ENCODE measurements at regions of chr10 and their contacts with region 1.

Region 1: DNA sequence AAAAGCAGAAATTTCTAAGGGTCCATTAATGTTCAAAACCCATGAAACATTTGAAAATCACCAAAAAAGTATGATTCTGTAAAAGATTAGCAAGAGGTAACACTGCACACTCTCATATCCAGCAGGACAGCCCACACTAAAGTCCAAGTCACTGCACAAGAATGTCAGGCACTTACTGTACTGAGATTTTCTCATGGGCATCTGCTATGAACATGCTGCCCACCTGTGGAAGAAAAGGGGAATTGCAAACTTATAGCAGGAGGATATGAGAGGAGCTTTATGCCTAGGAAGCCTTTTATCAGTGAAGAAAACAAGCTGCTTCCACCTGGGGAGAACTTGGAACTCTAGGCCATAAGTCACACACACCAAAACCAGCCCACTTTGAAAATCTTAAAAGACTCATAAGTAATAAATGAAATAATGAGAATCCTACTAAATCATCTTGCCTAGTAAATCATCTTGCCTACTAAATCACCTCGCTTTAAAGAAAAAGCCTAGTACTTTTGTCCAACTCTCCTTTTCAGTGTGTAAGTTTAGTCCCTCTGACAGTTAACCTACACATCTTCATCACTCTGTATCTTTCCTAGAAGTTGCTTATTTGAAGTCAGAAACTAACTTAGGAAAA is 46.1 kb downstream of the ARMH3 start:
- DNase-seq: peak; percentile 31
- ATAC-seq: peak; percentile 96
- H3K4me3 Mint-ChIP-seq: no peak overlapping the region
- H3K27ac Mint-ChIP-seq: peak overlapping the region; percentile 1; the same call in 1 of the 2 replicates
- H3K4me1 Mint-ChIP-seq: peaks cover 21% of the 10 kb centered on the region
- H3K27me3 Mint-ChIP-seq: no peaks in the 10 kb centered on the region
- CTCF ChIP-seq: peak; percentile 53

Region 2: GRCh38 chr10:101848894-101849351 is 161.0 kb before region 1 on chr10:
- CTCF ChIA-PET with region 1: interaction called, 44 read pairs
- POLR2A ChIA-PET with region 1: interaction called, 4 read pairs
- DNase-seq: no peak
- ATAC-seq: peak; percentile 62
- H3K4me3 Mint-ChIP-seq: no peak overlapping the region
- H3K27ac Mint-ChIP-seq: peak overlapping the region; percentile 65; the same call in 1 of the 2 replicates
- H3K4me1 Mint-ChIP-seq: peaks cover 33% of the 10 kb centered on the region
- H3K27me3 Mint-ChIP-seq: no peaks in the 10 kb centered on the region
- CTCF ChIP-seq: no peak

Region 3: DNA sequence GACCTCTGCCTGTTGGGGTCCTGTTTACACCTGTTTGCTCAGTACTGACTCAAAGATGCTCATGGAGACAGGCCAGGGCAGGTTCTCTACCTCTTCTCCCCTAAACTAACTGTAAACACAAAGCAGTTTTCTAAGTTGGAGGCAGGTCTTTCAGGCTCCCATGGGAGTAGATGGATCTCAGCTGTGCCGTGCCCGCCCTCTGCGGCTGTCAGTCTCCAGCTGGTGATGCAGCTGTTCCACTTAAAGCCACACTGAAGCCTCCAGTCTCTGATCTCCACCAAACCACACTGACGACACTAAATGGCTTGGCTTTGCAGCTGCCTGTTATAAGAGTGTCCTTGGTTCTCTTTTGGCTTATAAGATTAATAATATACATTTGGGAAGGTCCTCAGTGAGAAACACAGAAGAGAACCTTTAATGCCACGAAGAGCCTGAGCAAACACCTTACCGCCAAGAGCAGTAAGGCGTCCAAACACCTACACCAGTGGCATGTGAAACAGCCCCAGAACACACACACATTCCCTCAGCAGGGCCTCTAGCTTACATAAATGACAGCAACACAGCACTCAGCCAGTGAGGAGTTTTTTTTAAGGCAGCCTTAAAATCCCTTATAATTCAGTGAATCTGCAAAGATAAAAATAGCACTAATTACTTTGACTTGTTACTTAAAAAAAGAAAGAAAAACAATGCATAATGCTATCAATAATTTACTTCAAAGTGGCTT is 105.9 kb before region 1 on chr10:
- CTCF ChIA-PET with region 1: interaction called, 32 read pairs
- POLR2A ChIA-PET with region 1: no interaction called
- DNase-seq: no peak
- ATAC-seq: no peak
- H3K4me3 Mint-ChIP-seq: no peak overlapping the region
- H3K27ac Mint-ChIP-seq: peak overlapping the region; percentile 35; the same call in 1 of the 2 replicates
- H3K4me1 Mint-ChIP-seq: peaks cover 44% of the 10 kb centered on the region
- H3K27me3 Mint-ChIP-seq: no peaks in the 10 kb centered on the region
- CTCF ChIP-seq: no peak

Region 4: DNA sequence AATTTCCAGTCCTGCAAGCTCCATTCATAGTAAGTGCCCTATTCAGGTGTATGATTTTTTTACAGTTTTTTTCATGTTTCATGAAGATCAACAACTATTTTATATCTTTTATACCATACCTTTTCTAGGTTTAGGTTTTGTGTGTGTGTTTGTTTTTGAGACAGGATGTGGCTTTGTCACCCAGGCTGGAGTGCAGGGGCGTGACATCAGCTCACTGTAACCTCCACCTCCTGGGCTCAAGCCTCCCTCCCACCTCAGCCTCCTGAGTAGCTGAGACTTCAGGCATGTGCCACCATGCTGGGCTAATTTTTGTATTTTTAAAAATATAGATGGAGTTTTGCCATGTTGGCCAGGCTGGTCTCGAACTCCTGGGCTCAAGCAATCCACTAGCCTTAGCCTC is 11.0 kb after region 1 on chr10:
- CTCF ChIA-PET with region 1: interaction called, 17 read pairs
- POLR2A ChIA-PET with region 1: no interaction called
- DNase-seq: no peak
- ATAC-seq: no peak
- H3K4me3 Mint-ChIP-seq: no peak overlapping the region
- H3K27ac Mint-ChIP-seq: no peak overlapping the region
- H3K4me1 Mint-ChIP-seq: no peaks in the 10 kb centered on the region
- H3K27me3 Mint-ChIP-seq: no peaks in the 10 kb centered on the region
- CTCF ChIP-seq: no peak

Region 5: DNA sequence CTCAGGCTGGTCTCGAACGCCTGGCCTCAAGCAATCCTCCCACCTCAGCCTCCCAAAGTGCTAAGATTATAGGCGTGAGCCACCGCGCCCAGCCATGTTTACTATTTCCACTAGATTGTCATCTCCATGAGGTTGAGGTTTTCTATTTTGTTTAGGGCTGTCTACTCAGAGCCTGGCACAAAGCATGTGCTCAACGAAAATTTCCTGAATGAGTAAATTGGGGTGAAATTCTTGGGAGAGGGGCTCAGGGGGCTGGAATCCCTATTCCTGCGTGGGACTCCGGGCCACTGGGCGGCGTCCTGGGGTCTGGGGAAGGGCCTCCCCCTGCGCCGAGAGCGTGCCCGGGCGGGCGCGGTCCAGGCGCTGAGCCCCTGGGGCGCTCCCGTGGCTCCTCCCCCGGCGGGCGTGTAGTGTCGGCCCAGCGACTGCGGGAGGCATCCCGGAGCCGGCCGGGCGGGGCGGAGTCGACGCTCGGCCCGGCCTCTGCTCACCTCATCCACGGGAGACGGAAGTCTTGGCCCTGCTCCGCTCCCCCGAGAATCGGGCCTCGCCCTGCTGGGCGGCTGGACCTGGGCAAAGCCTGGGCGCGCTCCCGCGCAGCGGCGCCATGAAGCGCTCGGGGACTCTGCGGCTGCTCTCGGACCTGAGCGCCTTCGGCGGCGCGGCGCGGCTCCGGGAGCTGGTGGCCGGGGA is 55.1 kb after region 1 on chr10 and contains the start of gene HPS6:
- CTCF ChIA-PET with region 1: interaction called, 18 read pairs
- POLR2A ChIA-PET with region 1: no interaction called
- DNase-seq: peak; percentile 74
- ATAC-seq: peak; percentile 83
- H3K4me3 Mint-ChIP-seq: peak within 1 kb of the TSS; percentile 81
- H3K27ac Mint-ChIP-seq: peak within 1 kb of the TSS; percentile 67
- H3K4me1 Mint-ChIP-seq: peaks cover 15% of the 10 kb centered on the region
- H3K27me3 Mint-ChIP-seq: peaks cover 22% of the 10 kb centered on the region
- CTCF ChIP-seq: no peak
- total RNA-seq, gene HPS6: 18.7 to 20.6 TPM (median 20.6 TPM) in 3 replicates

Region 6: GRCh38 chr10:102211615-102212299 is 201.8 kb after region 1 on chr10:
- CTCF ChIA-PET with region 1: no interaction called
- POLR2A ChIA-PET with region 1: no interaction called
- DNase-seq: no peak
- ATAC-seq: no peak
- H3K4me3 Mint-ChIP-seq: no peak overlapping the region
- H3K27ac Mint-ChIP-seq: no peak overlapping the region
- H3K4me1 Mint-ChIP-seq: no peaks in the 10 kb centered on the region
- H3K27me3 Mint-ChIP-seq: peaks cover 9% of the 10 kb centered on the region
- CTCF ChIP-seq: no peak

Region 7: GRCh38 chr10:102322914-102323313 is 313.0 kb after region 1 on chr10:
- CTCF ChIA-PET with region 1: no interaction called
- POLR2A ChIA-PET with region 1: no interaction called
- DNase-seq: no peak
- ATAC-seq: no peak
- H3K4me3 Mint-ChIP-seq: no peak overlapping the region
- H3K27ac Mint-ChIP-seq: no peak overlapping the region
- H3K4me1 Mint-ChIP-seq: peaks cover 6% of the 10 kb centered on the region
- H3K27me3 Mint-ChIP-seq: no peaks in the 10 kb centered on the region; the same call in 1 of the 2 replicates
- CTCF ChIP-seq: no peak